ENCODE measurements at regions of chr9 and their contacts with region 1.

Region 1: GRCh38 chr9:109411798-109412352 is 86.2 kb downstream of the PTPN3 start:
- DNase-seq: no peak
- ATAC-seq: no peak; the same call in 1 of the 2 replicates
- H3K4me3 Mint-ChIP-seq: no peak overlapping the region
- H3K27ac Mint-ChIP-seq: peak overlapping the region; percentile 68; the same call in 1 of the 2 replicates
- H3K4me1 Mint-ChIP-seq: peaks cover 61% of the 10 kb centered on the region
- H3K27me3 Mint-ChIP-seq: no peaks in the 10 kb centered on the region
- CTCF ChIP-seq: peak; percentile 41; the same call in 1 of the 2 replicates

Region 2: GRCh38 chr9:109192732-109193361 is 219.0 kb before region 1 on chr9:
- CTCF ChIA-PET with region 1: interaction called, 13 read pairs
- POLR2A ChIA-PET with region 1: no interaction called
- DNase-seq: peak; percentile 69
- ATAC-seq: peak; percentile 96
- H3K4me3 Mint-ChIP-seq: no peak overlapping the region
- H3K27ac Mint-ChIP-seq: no peak overlapping the region
- H3K4me1 Mint-ChIP-seq: peaks cover 7% of the 10 kb centered on the region
- H3K27me3 Mint-ChIP-seq: peaks cover 3% of the 10 kb centered on the region; the same call in 1 of the 2 replicates
- CTCF ChIP-seq: peak; percentile 18; the same call in 1 of the 2 replicates

Region 3: GRCh38 chr9:109316207-109316640 is 95.7 kb before region 1 on chr9:
- CTCF ChIA-PET with region 1: interaction called, 14 read pairs
- POLR2A ChIA-PET with region 1: no interaction called
- DNase-seq: no peak
- ATAC-seq: peak; percentile 6
- H3K4me3 Mint-ChIP-seq: no peak overlapping the region
- H3K27ac Mint-ChIP-seq: peak overlapping the region; percentile 47
- H3K4me1 Mint-ChIP-seq: peaks cover 77% of the 10 kb centered on the region
- H3K27me3 Mint-ChIP-seq: peaks cover 3% of the 10 kb centered on the region
- CTCF ChIP-seq: no peak

Region 4: GRCh38 chr9:109401168-109401989 is 10.5 kb before region 1 on chr9:
- CTCF ChIA-PET with region 1: interaction called, 66 read pairs
- POLR2A ChIA-PET with region 1: no interaction called
- DNase-seq: peak; percentile 86
- ATAC-seq: peak; percentile 96
- H3K4me3 Mint-ChIP-seq: no peak overlapping the region
- H3K27ac Mint-ChIP-seq: no peak overlapping the region
- H3K4me1 Mint-ChIP-seq: peaks cover 12% of the 10 kb centered on the region
- H3K27me3 Mint-ChIP-seq: no peaks in the 10 kb centered on the region
- CTCF ChIP-seq: peak; percentile 89

Region 5: DNA sequence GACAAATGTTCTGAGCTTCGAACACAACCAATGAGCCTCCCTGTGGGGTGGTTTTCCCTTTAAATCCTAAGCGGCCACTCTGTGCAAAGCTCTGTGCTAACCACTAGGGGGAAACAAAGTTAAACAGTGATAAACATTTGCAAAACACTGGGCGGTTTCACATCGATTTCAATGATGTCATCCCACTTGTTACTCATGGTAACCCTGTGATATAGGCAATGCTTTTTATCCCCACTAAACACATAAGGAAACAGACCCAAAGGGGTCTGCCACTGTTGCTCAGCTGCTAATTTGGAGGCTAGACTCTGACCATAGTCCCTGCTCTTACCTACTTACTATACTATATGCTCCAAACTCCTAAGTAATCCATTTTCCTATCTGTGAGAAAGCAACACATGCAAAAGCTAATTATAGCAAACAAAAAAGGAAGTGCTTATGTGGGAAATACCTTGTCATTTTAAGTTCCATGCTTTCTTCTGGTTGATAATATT is 29.0 kb after region 1 on chr9:
- CTCF ChIA-PET with region 1: interaction called, 48 read pairs
- POLR2A ChIA-PET with region 1: no interaction called
- DNase-seq: peak; percentile 58
- ATAC-seq: peak; percentile 97
- H3K4me3 Mint-ChIP-seq: no peak overlapping the region
- H3K27ac Mint-ChIP-seq: peak overlapping the region; percentile 77
- H3K4me1 Mint-ChIP-seq: peaks cover 9% of the 10 kb centered on the region
- H3K27me3 Mint-ChIP-seq: peaks cover 2% of the 10 kb centered on the region; the same call in 1 of the 2 replicates
- CTCF ChIP-seq: peak; percentile 61

Region 6: GRCh38 chr9:109499631-109500410 is 87.9 kb after region 1 on chr9:
- CTCF ChIA-PET with region 1: interaction called, 12 read pairs
- POLR2A ChIA-PET with region 1: no interaction called
- DNase-seq: peak; percentile 63
- ATAC-seq: peak; percentile 81
- H3K4me3 Mint-ChIP-seq: peak overlapping the region; percentile 77
- H3K27ac Mint-ChIP-seq: no peak overlapping the region
- H3K4me1 Mint-ChIP-seq: peaks cover 21% of the 10 kb centered on the region
- H3K27me3 Mint-ChIP-seq: peaks cover 71% of the 10 kb centered on the region
- CTCF ChIP-seq: no peak